IMR-90 (cell line): ENCODE measurements at regions of chr21 and their contacts with region 1.

Region 1: DNA sequence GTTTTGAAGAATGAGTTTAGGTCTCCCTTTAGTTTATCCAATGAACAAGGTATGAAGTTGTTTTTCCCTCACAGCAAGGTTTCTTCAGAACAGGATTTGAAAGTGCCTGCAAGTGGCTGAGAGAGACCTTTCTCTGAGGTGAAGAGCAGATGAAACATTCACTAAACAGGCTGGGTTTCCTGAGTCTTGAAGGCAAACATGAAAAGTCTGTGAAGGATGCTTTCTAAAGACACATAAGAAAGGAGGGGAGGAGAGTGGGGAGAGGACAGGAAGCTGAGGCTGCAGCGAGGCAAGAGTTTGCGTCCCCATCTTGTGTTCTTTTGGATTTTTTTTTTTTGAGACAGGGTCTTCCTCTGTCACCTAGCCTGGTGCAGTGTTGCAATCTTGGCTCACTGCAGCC is 95.7 kb upstream of the SIM2 start:
- DNase-seq: no peak
- ATAC-seq: no peak
- H3K4me3 ChIP-seq: no peak overlapping the region
- H3K27ac ChIP-seq: no peak overlapping the region
- H3K4me1 ChIP-seq: no peaks in the 10 kb centered on the region
- H3K27me3 ChIP-seq: peaks cover 63% of the 10 kb centered on the region
- CTCF ChIP-seq: no peak
- POLR2A ChIP-seq: no peak
- RAD21 ChIP-seq: no peak

Region 2: GRCh38 chr21:36647279-36648093 is 44.3 kb after region 1 on chr21:
- CTCF ChIA-PET with region 1: no interaction called
- POLR2A ChIA-PET with region 1: interaction called, 21 read pairs
- dilution Hi-C with region 1: no loop called
- in situ Hi-C with region 1: no loop called
- intact Hi-C with region 1: no loop called
- DNase-seq: peak; percentile 48
- ATAC-seq: peak; percentile 67
- H3K4me3 ChIP-seq: no peak overlapping the region
- H3K27ac ChIP-seq: no peak overlapping the region
- H3K4me1 ChIP-seq: peaks cover 3% of the 10 kb centered on the region; the same call in 1 of the 2 replicates
- H3K27me3 ChIP-seq: peaks cover 10% of the 10 kb centered on the region
- CTCF ChIP-seq: no peak
- POLR2A ChIP-seq: no peak
- RAD21 ChIP-seq: no peak